AG04450 (cell line): ENCODE measurements at regions of chr11 and their contacts with region 1.

Region 1: GRCh38 chr11:124644426-124645280 is 22.0 kb downstream of the TBRG1 start:
- DNase-seq: no peak
- H3K4me3 ChIP-seq: no peak overlapping the region; the same call in 1 of the 2 replicates
- H3K27ac ChIP-seq: peak overlapping the region; percentile 40
- H3K27me3 ChIP-seq: no peaks in the 10 kb centered on the region
- CTCF ChIP-seq: peak; percentile 78

Region 2: DNA sequence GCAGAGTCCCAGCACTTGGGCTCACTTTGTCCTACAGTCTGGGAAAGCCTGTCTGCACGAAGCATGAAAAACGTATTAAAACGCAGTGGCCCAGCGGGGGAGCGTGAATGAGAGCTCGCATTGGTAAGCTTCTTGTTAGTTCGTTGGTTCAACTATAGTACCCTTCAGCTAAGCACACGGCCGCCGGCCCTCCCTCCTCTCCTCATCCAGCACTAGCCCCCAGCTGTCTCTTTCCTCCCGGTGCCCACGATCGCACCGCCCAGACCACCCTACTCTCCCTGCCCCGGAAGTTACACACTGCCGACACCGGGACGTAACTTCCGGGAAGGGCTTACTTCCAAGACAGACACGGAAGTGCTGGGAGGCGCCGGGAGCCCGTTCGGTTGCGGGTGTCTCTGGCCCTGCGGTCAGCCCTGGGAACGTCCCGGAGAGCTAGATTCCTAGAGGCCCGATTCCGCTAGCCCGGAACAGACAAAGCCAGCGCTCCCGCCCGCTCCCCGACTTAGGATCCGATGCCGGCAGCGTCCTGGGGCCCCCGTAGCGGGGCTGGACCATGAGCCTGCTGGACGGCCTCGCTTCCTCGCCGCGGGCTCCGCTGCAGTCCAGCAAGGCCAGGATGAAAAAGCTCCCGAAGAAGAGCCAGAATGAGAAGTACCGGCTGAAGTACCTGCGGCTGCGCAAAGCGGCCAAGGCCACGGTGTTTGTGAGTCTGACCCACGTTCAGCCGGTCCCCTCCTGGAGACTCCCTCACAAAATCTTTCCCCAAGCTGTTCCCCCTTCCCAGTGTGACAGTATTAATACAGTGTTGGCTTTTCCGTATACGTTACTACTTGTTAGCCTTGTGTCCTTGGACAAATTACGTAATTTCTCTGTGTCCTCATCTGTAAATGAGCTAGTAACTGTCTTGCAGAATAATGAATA is 21.9 kb before region 1 on chr11 and contains the start of gene TBRG1:
- CTCF ChIA-PET with region 1: interaction called, 49 read pairs
- POLR2A ChIA-PET with region 1: no interaction called
- DNase-seq: peak; percentile 72
- H3K4me3 ChIP-seq: peak within 1 kb of the TSS; percentile 97
- H3K27ac ChIP-seq: peak within 1 kb of the TSS; percentile 94
- H3K27me3 ChIP-seq: peaks cover 12% of the 10 kb centered on the region
- CTCF ChIP-seq: no peak
- polyA plus RNA-seq, gene TBRG1: 30.9 and 31.4 TPM in 2 replicates

Region 3: GRCh38 chr11:124662106-124662505 is 17.5 kb after region 1 on chr11:
- CTCF ChIA-PET with region 1: interaction called, 37 read pairs
- POLR2A ChIA-PET with region 1: interaction called, 3 read pairs
- DNase-seq: no peak
- H3K4me3 ChIP-seq: no peak overlapping the region
- H3K27ac ChIP-seq: no peak overlapping the region
- H3K27me3 ChIP-seq: no peaks in the 10 kb centered on the region
- CTCF ChIP-seq: no peak

Region 4: DNA sequence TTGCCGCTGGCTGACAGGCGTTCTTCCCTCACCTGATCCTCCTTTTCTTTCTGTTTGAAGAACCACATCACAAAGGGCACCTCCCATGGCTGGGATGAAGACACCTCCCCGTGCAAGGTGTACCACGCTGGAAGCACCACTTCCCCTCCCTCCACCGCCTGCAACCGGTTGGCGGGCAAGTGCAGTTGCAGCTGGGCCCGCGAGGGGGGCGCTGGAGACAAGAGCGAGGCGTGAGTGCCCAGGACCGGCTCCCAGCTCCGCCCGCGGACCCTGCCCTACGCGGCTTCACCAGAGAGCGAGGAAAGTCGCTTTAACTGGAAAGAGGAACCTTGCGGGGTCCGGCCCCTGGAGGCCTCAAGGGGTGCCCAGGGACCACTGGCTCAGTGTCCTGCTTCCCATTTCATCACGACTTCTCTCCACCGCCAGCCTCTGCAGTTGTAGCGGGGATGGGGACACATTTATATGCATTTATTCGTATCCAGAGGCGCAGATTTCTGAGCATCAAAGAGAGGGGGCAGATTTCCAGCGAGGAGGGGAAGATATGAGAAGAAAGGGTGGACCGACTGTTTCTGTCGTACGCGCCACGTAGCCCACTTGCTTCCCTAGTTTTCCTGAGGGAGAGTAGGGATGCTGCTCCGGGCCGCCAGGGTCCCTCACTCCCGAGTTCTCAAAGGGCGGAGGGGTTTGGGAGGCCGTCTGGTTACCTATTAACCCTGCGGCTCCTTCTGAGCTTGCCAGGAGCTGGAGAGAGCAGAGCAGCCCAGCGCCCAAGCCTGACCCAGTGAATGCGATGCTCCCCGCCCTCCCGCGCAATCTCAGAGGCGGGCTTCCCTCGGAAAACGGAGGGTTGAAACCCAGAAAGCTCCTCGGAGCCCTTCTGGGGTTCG is 113.9 kb after region 1 on chr11:
- CTCF ChIA-PET with region 1: interaction called, 46 read pairs
- POLR2A ChIA-PET with region 1: no interaction called
- DNase-seq: no peak
- H3K4me3 ChIP-seq: peak overlapping the region; percentile 46
- H3K27ac ChIP-seq: no peak overlapping the region
- H3K27me3 ChIP-seq: peaks cover 24% of the 10 kb centered on the region
- CTCF ChIP-seq: peak; percentile 66

Region 5: GRCh38 chr11:124793466-124794278 is 149.0 kb after region 1 on chr11:
- CTCF ChIA-PET with region 1: interaction called, 41 read pairs
- POLR2A ChIA-PET with region 1: no interaction called
- DNase-seq: no peak
- H3K4me3 ChIP-seq: no peak overlapping the region
- H3K27ac ChIP-seq: no peak overlapping the region
- H3K27me3 ChIP-seq: no peaks in the 10 kb centered on the region
- CTCF ChIP-seq: peak; percentile 78

Region 6: GRCh38 chr11:124837491-124837856 is 192.8 kb after region 1 on chr11:
- CTCF ChIA-PET with region 1: interaction called, 107 read pairs
- POLR2A ChIA-PET with region 1: no interaction called
- DNase-seq: peak; percentile 66
- H3K4me3 ChIP-seq: no peak overlapping the region
- H3K27ac ChIP-seq: no peak overlapping the region
- H3K27me3 ChIP-seq: peaks cover 44% of the 10 kb centered on the region
- CTCF ChIP-seq: peak; percentile 81